ENCODE measurements at regions of chr2 and their contacts with region 1.

Region 1: DNA sequence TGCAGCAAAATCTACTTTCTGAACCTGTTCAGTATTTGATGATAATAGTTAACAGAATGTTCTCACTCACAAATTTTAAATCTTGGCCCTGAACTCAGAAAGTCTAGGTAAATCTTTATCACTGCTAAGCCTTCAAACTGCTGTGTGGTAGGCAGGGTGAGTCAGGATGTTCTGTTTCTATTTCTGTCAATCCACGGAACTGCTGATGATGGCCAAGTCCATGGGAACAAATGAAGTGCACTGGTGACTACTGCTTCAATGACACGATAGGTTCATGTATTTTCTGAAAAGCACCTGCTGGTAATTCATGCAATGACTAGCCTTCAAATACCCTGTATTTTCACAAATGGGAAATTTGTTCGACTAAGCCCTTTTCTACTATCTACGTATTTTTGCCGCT is 14.2 kb downstream of the NIFK start:
- DNase-seq: no peak
- ATAC-seq: no peak
- H3K4me3 ChIP-seq: no peak overlapping the region
- H3K27ac ChIP-seq: no peak overlapping the region
- H3K4me1 ChIP-seq: peaks cover 0 to 15% of the 10 kb centered on the region in 2 experiments; a peak in 1 of 4 replicates
- H3K27me3 ChIP-seq: no peaks in the 10 kb centered on the region
- CTCF ChIP-seq: no peak
- POLR2A ChIP-seq: no peak
- RAD21 ChIP-seq: no peak

Region 2: DNA sequence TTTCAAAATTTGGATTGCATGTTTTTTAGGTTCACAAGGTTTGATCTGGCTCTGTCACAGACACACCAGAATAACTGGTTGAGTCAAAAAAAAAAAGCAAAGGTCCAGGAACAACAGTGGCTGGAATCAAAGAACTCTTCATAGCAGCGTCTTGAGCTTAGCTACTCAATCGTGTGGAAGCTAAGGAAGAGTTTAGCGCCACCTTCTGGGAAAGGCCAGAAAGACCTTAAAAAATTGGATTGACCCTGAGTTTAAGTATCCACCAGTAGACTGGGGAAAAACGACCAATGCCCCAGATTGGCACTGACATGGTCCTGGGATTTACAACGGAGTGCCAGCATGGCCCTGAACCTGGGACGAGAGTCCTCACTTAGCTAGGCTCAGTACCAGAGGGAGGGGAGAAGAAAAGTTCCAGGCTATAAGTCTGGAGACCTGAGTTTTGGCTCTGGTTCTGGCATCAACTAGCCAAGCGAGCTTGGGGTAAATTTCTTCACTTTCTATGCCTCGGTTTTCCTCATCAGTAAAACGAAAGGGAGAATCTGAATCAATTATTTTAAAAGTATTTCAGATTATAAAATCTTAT is 366.3 kb before region 1 on chr2:
- CTCF ChIA-PET with region 1: no interaction called
- POLR2A ChIA-PET with region 1: no interaction called
- RAD21 ChIA-PET with region 1: no interaction called
- intact Hi-C with region 1: no loop called
- DNase-seq: peak; percentile 48
- ATAC-seq: peak; percentile 95
- H3K4me3 ChIP-seq: no peak overlapping the region
- H3K27ac ChIP-seq: no peak overlapping the region
- H3K4me1 ChIP-seq: peaks cover 0 to 9% of the 10 kb centered on the region in 2 experiments; a peak in 1 of 4 replicates
- H3K27me3 ChIP-seq: no peaks in the 10 kb centered on the region
- CTCF ChIP-seq: peak; percentile 76 to 82 (median 78)
- POLR2A ChIP-seq: no peak
- RAD21 ChIP-seq: peak; percentile 80

Region 3: DNA sequence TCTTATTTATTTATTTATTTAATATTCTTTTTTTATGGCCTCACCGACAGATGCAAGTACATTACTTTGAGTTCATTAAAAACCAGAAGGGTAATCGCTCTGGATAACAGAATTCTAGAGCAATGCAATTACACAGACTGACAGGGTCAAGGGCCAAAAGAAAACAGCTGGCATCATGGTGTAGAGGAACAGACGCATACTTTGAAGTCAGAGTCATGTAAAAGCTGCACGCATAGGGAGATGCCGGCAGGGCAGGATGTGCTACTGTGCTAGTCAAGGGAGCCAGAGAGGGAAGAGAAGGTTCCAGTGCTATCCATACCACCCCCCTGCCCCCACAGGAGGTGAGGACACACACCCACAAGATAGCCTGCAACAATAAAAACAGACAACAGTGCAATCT is 322.3 kb before region 1 on chr2:
- CTCF ChIA-PET with region 1: interaction called, 9 read pairs
- POLR2A ChIA-PET with region 1: no interaction called
- RAD21 ChIA-PET with region 1: no interaction called
- intact Hi-C with region 1: loop called (anchors 1 kb)
- DNase-seq: no peak
- ATAC-seq: no peak
- H3K4me3 ChIP-seq: no peak overlapping the region
- H3K27ac ChIP-seq: no peak overlapping the region
- H3K4me1 ChIP-seq: no peaks in the 10 kb centered on the region
- H3K27me3 ChIP-seq: no peaks in the 10 kb centered on the region
- CTCF ChIP-seq: no peak
- POLR2A ChIP-seq: no peak
- RAD21 ChIP-seq: no peak

Region 4: GRCh38 chr2:121479882-121480522 is 242.5 kb before region 1 on chr2:
- CTCF ChIA-PET with region 1: no interaction called
- POLR2A ChIA-PET with region 1: no interaction called
- RAD21 ChIA-PET with region 1: no interaction called
- intact Hi-C with region 1: no loop called
- DNase-seq: no peak
- ATAC-seq: peak; percentile 74
- H3K4me3 ChIP-seq: no peak overlapping the region
- H3K27ac ChIP-seq: no peak overlapping the region
- H3K4me1 ChIP-seq: peaks cover 4% of the 10 kb centered on the region in 2 experiments; a peak in 3 of 4 replicates
- H3K27me3 ChIP-seq: no peaks in the 10 kb centered on the region
- CTCF ChIP-seq: peak in 2 of 3 experiments; percentile 39 to 45; a peak in 4 of 6 replicates
- POLR2A ChIP-seq: no peak
- RAD21 ChIP-seq: no peak

Region 5: GRCh38 chr2:121596221-121597080 is 126.0 kb before region 1 on chr2:
- CTCF ChIA-PET with region 1: interaction called, 3 read pairs
- POLR2A ChIA-PET with region 1: no interaction called
- RAD21 ChIA-PET with region 1: no interaction called
- intact Hi-C with region 1: loop called (anchors 1 kb)
- DNase-seq: peak; percentile 33
- ATAC-seq: peak; percentile 88
- H3K4me3 ChIP-seq: no peak overlapping the region
- H3K27ac ChIP-seq: peak overlapping the region; percentile 5; the same call in 1 of the 2 replicates
- H3K4me1 ChIP-seq: peaks cover 3 to 11% of the 10 kb centered on the region in 2 experiments; a peak in 3 of 4 replicates
- H3K27me3 ChIP-seq: no peaks in the 10 kb centered on the region
- CTCF ChIP-seq: peak; percentile 48 to 62 (median 61)
- POLR2A ChIP-seq: no peak
- RAD21 ChIP-seq: peak; percentile 63

Region 6: GRCh38 chr2:121736462-121737341 is 14.2 kb after region 1 on chr2 and contains the start of gene NIFK:
- CTCF ChIA-PET with region 1: no interaction called
- POLR2A ChIA-PET with region 1: no interaction called
- RAD21 ChIA-PET with region 1: no interaction called
- intact Hi-C with region 1: no loop called
- DNase-seq: peak; percentile 93
- ATAC-seq: peak; percentile 94
- H3K4me3 ChIP-seq: peak within 1 kb of the TSS; percentile 97 to 100
- H3K27ac ChIP-seq: peak within 1 kb of the TSS; percentile 70
- H3K4me1 ChIP-seq: peaks cover 8 to 13% of the 10 kb centered on the region in 2 experiments; a peak in 3 of 4 replicates
- H3K27me3 ChIP-seq: no peaks in the 10 kb centered on the region
- CTCF ChIP-seq: no peak
- POLR2A ChIP-seq: peak; percentile 47
- RAD21 ChIP-seq: no peak
- total RNA-seq, gene NIFK: 93.2 TPM

Region 7: GRCh38 chr2:122145856-122146255 is 423.4 kb after region 1 on chr2:
- CTCF ChIA-PET with region 1: no interaction called
- POLR2A ChIA-PET with region 1: no interaction called
- RAD21 ChIA-PET with region 1: no interaction called
- intact Hi-C with region 1: no loop called
- DNase-seq: no peak
- ATAC-seq: no peak
- H3K4me3 ChIP-seq: no peak overlapping the region
- H3K27ac ChIP-seq: no peak overlapping the region
- H3K4me1 ChIP-seq: no peaks in the 10 kb centered on the region
- H3K27me3 ChIP-seq: 0 out of 2 replicates have a peak, but pooled peaks cover 4% of the 10 kb centered on the region
- CTCF ChIP-seq: no peak
- POLR2A ChIP-seq: no peak
- RAD21 ChIP-seq: no peak

Measured in HCT116 (cell line).